AG04449 (cell line): ENCODE measurements at regions of chr5 and their contacts with region 1.

Region 1: DNA sequence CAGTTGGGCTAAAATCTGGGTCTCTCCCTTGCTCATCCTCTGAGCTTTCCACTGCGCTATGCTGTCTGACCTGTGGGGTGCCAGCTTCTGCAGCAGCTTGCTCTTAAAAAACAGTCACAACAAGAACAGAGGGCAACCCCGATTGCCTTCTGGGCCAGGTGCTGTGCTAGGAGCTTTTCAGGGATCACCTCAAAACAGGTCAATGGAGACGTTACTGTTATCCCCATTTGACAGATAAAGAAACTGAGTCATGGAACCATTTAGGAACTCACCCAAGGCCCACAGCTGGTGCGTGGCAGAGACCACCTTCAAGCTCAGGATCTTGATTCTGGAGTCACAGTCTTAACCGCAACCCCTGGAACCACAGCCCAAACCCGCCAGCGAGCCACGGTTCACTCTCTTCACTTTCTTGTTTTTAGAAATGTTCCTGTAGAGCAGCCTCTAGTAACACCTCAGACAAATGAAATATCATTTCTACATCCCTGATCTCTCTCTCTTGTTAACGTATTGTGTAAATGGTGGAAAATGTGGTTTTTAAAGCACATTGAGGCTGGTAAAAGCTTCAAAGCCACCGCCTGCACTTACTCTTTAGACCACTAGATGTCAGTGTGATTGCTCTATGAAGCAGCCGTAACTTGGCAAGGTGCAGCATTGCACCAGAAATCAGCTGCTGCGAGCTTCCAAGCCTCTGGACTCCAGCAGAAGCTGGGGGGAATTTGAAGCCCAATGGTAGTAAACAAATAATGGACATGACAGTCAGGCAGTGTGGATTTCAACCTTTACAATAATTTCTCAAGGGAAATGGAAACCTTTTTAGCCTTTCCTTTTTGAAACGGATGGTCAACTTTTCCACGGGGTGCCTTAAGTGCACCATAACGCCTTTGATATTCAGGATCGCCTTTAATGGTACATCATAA is 1.7 kb downstream of the FYB1 start:
- DNase-seq: no peak
- H3K4me3 ChIP-seq: no peak overlapping the region
- CTCF ChIP-seq: peak; percentile 84

Region 2: GRCh38 chr5:39148983-39149534 is 68.6 kb before region 1 on chr5:
- CTCF ChIA-PET with region 1: interaction called, 12 read pairs
- POLR2A ChIA-PET with region 1: no interaction called
- DNase-seq: no peak
- H3K4me3 ChIP-seq: no peak overlapping the region
- CTCF ChIP-seq: no peak

Region 3: GRCh38 chr5:39187831-39188731 is 29.5 kb before region 1 on chr5:
- CTCF ChIA-PET with region 1: interaction called, 21 read pairs
- POLR2A ChIA-PET with region 1: no interaction called
- DNase-seq: no peak
- H3K4me3 ChIP-seq: no peak overlapping the region
- CTCF ChIP-seq: no peak

Region 4: DNA sequence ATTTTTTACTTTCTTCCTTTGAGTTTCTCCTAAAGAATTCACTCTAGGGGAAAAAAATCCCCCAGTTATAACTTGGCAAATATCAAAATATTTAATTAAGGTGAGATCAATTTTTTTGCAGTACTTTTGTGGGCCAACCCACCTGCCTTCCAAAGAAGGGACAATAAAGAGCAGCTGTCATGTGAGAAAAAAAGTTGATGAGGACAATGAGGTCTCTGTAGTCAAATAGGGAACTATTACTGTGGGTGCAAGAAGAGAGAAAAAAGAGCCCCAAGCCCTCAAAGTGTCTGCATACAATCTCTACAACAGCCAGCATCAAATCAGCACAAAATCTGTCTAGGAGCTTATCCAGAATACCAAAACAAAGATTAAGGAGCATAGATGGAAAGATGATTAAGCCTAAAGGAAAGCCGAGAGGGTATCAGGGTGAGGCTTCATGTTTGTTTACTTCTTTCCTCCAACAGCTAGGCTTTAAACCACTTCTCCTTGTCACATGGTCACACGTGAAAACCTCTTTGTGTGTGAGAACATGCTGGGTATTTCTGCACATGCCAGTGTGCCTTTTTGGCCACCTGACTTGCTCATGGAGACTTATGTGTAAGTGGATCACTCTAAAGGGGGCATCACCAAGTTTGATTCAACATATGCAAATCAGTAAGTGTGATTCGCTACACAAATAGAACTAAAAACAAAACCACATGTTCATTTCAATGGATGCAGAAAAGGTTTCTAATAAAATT is 20.9 kb after region 1 on chr5:
- CTCF ChIA-PET with region 1: interaction called, 166 read pairs
- POLR2A ChIA-PET with region 1: no interaction called
- DNase-seq: no peak
- H3K4me3 ChIP-seq: no peak overlapping the region
- CTCF ChIP-seq: no peak

Region 5: DNA sequence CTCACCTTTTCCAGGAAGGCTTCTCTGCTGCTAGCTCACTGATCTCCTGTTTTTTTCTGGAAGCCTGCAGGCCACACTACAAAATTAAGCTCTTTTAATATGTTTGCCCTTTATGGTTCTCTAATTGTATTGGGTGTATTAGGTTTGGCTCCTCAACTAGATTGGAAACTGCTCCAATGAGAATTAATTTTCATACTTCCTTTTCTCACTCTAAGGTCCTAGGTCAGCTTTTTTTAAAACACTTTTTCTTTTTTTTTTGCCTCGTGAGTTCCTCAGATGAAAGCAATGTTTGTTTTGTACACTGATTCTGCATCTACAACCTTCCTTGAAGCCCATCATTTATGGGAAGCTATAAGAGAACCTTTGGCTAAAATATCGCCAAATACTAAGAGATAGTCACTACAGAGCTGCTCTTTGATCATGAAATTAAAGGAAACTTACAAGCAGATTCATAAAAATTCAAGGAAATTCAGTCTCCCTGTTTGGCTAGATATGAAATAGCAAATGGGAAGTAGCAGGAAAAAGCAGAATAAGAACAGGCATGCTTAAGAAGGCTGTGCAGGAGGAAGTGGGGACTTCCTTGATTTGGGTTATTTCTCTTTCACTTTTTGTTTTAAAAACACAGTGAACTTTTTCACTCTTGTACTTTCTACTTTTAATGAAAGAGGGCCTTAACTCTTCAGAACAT is 56.9 kb after region 1 on chr5:
- CTCF ChIA-PET with region 1: interaction called, 12 read pairs
- POLR2A ChIA-PET with region 1: no interaction called
- DNase-seq: no peak
- H3K4me3 ChIP-seq: no peak overlapping the region
- CTCF ChIP-seq: no peak

Region 6: DNA sequence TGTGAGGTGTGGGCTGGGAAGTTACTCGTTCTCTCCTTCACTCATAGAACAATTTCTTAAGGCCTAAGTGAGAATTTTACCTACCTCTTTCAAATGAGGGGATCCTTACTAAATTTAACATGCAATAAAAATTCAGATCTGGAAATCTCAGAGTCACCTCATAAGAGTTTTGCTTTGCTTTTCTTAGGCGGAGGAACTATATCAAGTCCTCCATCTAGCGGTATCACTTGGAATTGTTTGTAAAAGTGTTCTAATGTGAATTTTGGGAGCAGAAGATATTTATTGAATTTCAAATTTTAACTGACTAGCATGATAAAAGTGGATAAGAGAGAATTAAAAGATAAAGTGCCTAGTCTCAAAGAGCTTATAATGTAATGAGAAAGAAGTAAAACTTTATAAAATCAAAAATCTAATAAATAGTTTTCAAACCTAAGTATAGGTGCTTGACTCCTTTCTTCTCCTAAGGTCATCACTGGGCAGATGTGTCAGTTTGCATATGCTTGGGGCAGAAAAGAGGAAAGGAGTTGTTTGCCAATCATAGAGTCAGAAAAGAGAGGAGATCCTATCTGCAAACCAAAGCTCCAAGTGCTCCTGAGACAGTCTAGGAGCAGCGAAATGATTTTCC is 352.9 kb after region 1 on chr5:
- CTCF ChIA-PET with region 1: interaction called, 84 read pairs
- POLR2A ChIA-PET with region 1: no interaction called
- DNase-seq: no peak
- H3K4me3 ChIP-seq: no peak overlapping the region
- CTCF ChIP-seq: peak; percentile 33